Common myeloid progenitor, CD34-positive (primary cell): ENCODE measurements at regions of chr20 and their contacts with region 1.

Region 1: GRCh38 chr20:4053071-4053919 is 37.9 kb upstream of the RNF24 start:
- DNase-seq: no peak
- H3K4me3 ChIP-seq: no peak overlapping the region
- H3K27ac ChIP-seq: no peak overlapping the region
- H3K4me1 ChIP-seq: peaks cover 0 to 28% (median 2%) of the 10 kb centered on the region in 4 experiments
- H3K27me3 ChIP-seq: no peaks in the 10 kb centered on the region

Region 2: DNA sequence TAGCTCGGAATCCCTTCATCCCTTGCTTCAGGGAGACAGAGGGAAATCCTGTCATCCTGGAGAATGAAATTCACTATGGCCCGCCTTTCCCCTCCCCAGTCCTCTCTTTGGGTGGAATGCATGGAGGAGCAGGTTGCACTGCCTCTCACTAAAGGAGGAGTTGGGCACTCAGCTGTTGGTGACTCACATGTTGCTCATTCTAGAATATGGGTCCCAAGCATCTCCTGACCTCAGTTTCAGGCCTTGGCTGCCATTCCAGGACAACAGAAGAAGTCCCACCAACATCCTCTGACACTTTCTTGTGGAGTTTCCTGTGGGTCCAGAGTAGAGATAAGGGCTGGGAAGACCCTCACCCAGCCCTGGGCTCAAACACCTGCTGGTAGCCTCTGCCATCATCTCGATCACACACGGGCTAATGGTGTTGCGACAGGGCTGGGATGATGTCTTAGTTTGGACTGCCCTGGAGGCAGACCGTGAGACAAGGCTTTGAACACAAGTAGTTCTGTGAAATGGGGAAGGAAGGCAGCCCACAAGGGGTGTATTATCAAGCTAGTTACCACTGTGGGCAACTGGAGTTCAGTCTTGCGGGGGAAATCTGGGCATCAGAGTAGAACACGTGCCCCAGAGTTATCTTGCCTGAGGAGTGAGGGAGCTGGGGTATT is 14.4 kb after region 1 on chr20:
- CTCF ChIA-PET with region 1: interaction called, 30 read pairs
- POLR2A ChIA-PET with region 1: no interaction called
- DNase-seq: no peak
- H3K4me3 ChIP-seq: no peak overlapping the region
- H3K27ac ChIP-seq: no peak overlapping the region
- H3K4me1 ChIP-seq: peaks cover 18 to 82% (median 54%) of the 10 kb centered on the region in 4 experiments
- H3K27me3 ChIP-seq: no peaks in the 10 kb centered on the region

Region 3: DNA sequence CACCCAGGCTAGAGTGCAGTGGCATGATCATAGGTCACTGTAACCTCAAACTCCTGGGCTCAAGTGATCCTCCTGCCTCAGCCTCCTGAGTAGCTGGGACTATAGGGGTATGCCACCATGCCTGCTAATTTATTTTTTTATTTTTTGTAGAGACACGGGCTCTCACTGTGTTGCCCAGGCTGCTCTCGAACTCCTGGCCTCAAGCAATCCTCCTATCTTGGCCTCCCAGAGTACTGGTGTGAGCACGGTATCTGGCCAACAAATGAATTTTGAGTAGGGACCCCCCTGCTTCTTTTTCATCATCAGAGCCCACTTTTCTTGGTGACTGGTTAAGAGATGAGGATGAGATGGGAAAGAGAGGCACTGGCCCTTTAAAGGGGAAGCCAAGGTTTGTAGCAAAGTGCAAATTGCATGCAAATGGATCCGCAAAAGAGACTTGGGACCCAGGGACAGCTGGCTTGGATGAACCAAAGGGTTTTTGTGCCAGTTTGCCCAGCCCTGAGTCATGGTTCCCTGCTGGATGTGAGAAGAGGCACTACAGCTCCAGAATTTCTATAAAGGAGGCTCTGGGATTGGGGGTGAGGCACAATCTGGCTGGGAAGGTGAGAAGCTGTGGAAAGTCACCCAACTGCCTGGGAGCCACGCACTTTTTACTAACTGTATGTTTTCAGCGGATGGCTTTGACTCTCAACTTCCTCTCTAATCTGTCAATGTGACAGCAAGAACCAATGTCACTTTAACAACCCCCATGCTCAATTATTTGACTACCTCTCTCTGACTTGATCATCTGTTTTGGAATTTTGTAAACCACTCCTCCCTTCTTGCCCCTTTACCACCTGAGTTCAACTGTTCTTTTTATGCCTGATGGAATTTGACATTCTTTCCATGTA is 20.8 kb after region 1 on chr20:
- CTCF ChIA-PET with region 1: interaction called, 30 read pairs
- POLR2A ChIA-PET with region 1: no interaction called
- DNase-seq: peak in 2 of 3 donors; percentile 57 to 69
- H3K4me3 ChIP-seq: peak overlapping the region in 1 of 7 experiments; percentile 48
- H3K27ac ChIP-seq: peak overlapping the region in 1 of 2 experiments; percentile 28
- H3K4me1 ChIP-seq: peaks cover 18 to 72% (median 51%) of the 10 kb centered on the region in 4 experiments
- H3K27me3 ChIP-seq: no peaks in the 10 kb centered on the region

Region 4: GRCh38 chr20:4730780-4731179 is 677.5 kb after region 1 on chr20:
- CTCF ChIA-PET with region 1: no interaction called
- POLR2A ChIA-PET with region 1: no interaction called
- DNase-seq: peak in 2 of 3 donors; percentile 50 to 56
- H3K4me3 ChIP-seq: no peak overlapping the region
- H3K27ac ChIP-seq: no peak overlapping the region
- H3K4me1 ChIP-seq: peaks cover 0 to 11% (median 2%) of the 10 kb centered on the region in 4 experiments
- H3K27me3 ChIP-seq: peaks cover 0 to 10% (median 4%) of the 10 kb centered on the region in 5 experiments